Left cardiac atrium (tissue), 4 donors: ENCODE measurements at regions of chr1 and their contacts with region 1.

Region 1: GRCh38 chr1:109213785-109214468 is at the start of gene SARS1:
- DNase-seq: peak; percentile 91
- ATAC-seq: peak; percentile 97
- total RNA-seq, gene SARS1: 109 to 141 TPM

Region 2: GRCh38 chr1:109099938-109100773 is 113.8 kb before region 1 on chr1:
- intact Hi-C with region 1: loop called in 1 of 2 experiments (anchors 10 kb)
- DNase-seq: peak; percentile 97
- ATAC-seq: peak; percentile 98 to 99

Region 3: DNA sequence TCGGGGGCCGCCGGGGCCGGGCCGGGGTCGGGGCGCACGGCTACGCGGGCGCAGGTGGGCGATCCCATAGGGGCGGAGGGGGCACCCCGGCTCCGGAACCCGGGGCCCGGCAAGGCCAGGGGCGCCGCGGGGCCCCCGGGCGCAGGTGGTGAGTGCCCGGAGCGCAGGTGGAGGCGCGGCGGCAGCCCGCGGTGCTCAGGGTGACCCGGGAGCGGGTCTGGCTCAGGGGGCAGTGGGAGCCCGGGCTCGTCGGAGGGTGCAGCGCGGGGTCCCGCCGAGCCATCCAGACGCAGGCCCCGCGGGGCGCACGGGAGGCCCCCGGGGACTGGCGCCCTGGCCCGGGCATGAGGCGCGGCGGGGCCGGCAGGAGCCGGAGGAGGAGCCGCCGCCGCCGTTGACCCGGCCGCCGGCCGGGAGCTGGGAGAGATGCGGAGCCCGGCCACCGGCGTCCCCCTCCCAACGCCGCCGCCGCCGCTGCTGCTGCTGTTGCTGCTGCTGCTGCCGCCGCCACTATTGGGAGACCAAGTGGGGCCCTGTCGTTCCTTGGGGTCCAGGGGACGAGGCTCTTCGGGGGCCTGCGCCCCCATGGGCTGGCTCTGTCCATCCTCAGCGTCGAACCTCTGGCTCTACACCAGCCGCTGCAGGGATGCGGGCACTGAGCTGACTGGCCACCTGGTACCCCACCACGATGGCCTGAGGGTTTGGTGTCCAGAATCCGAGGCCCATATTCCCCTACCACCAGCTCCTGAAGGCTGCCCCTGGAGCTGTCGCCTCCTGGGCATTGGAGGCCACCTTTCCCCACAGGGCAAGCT is 35.9 kb after region 1 on chr1:
- intact Hi-C with region 1: loop called in 1 of 2 experiments (anchors 5 kb)
- DNase-seq: peak; percentile 22
- ATAC-seq: no peak